Activated CD8-positive, alpha-beta T cell treated with anti-CD3 and anti-CD28 coated beads for 36 hours (primary cell): ENCODE measurements at regions of chr12 and their contacts with region 1.

Region 1: GRCh38 chr12:7018350-7019042 is at the start of gene LPCAT3:
- DNase-seq: peak; percentile 98
- ATAC-seq: peak; percentile 97
- H3K4me3 Mint-ChIP-seq: peak within 1 kb of the TSS; percentile 96
- H3K27ac Mint-ChIP-seq: peak within 1 kb of the TSS; percentile 91
- H3K4me1 Mint-ChIP-seq: peaks cover 32% of the 10 kb centered on the region
- H3K27me3 Mint-ChIP-seq: no peaks in the 10 kb centered on the region
- CTCF ChIP-seq: peak; percentile 87
- total RNA-seq, gene LPCAT3: 17.3 to 18.1 TPM

Region 2: DNA sequence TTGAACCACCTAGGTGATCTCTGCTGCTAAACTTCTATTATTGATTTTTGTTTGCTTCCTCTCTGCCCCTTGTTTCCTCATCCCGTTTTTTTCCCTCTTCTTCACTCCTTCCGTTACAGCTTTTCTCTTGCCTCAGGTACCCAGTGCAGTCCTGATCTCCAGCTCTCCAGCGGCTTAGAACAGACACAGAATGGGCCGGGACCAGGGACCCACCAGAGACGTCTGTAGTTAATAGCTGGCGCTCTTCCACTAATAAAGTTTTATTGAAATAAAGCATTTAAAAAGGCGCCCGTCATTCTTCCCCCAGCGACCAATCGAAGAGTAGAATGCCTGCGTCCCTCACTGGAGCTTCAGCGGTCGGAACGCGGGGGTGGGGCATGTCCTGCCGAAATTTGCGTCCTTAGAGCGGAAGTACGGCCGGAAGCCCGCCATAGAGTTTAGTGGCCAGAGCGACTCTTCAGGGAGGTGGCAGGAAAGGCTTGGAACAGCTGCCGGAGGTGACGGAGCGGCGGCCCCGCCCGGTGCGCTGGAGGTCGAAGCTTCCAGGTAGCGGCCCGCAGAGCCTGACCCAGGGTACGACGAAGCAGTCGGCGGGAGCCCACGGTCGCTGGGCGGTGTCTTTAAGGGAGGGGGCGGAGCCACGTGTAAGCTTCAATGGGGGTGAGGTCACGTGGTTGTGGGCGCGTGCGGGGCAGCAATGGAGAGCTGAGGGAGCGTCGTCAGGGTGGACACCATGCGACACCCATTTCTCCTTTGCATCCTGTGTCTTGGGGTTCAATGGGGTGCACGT is 294.7 kb before region 1 on chr12 and contains the start of gene COPS7A:
- CTCF ChIA-PET with region 1: no interaction called
- POLR2A ChIA-PET with region 1: no interaction called
- intact Hi-C with region 1: no loop called
- DNase-seq: peak; percentile 100
- ATAC-seq: peak; percentile 94
- H3K4me3 Mint-ChIP-seq: peak within 1 kb of the TSS; percentile 85
- H3K27ac Mint-ChIP-seq: peak within 1 kb of the TSS; percentile 97
- H3K4me1 Mint-ChIP-seq: peaks cover 24% of the 10 kb centered on the region
- H3K27me3 Mint-ChIP-seq: no peaks in the 10 kb centered on the region
- CTCF ChIP-seq: no peak
- total RNA-seq, gene COPS7A: 35.9 to 38.8 TPM

Region 3: DNA sequence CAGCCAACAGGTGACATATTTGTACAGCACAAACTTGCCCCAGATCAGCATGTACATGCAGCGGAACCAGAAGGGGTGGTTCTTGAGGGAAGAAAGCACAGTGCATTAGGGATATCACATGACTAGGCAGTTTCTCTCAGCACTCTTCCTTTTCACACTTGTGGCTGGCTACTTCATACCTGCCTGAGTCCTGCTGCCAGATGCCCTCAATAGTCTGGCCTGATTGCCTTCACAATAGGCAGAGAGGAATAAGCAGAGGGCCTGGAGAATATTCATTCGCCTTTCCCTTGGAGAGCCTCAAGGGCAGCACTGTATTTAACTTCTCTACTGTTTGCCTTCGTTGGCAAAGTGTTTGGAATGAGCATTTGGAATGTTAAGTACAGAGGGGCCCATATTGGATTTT is 39.9 kb before region 1 on chr12:
- CTCF ChIA-PET with region 1: interaction called, 6 read pairs
- POLR2A ChIA-PET with region 1: interaction called, 10 read pairs
- intact Hi-C with region 1: no loop called
- DNase-seq: no peak
- ATAC-seq: no peak
- H3K4me3 Mint-ChIP-seq: no peak overlapping the region
- H3K27ac Mint-ChIP-seq: no peak overlapping the region
- H3K4me1 Mint-ChIP-seq: peaks cover 18% of the 10 kb centered on the region
- H3K27me3 Mint-ChIP-seq: no peaks in the 10 kb centered on the region
- CTCF ChIP-seq: no peak

Region 4: GRCh38 chr12:7042842-7043241 is 24.3 kb after region 1 on chr12:
- CTCF ChIA-PET with region 1: interaction called, 12 read pairs
- POLR2A ChIA-PET with region 1: interaction called, 4 read pairs
- intact Hi-C with region 1: no loop called
- DNase-seq: no peak
- ATAC-seq: no peak
- H3K4me3 Mint-ChIP-seq: no peak overlapping the region
- H3K27ac Mint-ChIP-seq: no peak overlapping the region
- H3K4me1 Mint-ChIP-seq: peaks cover 6% of the 10 kb centered on the region
- H3K27me3 Mint-ChIP-seq: no peaks in the 10 kb centered on the region
- CTCF ChIP-seq: peak; percentile 48